Psoas muscle (tissue), 8 donors: ENCODE measurements at regions of chr10 and their contacts with region 1.

Region 1: GRCh38 chr10:59079386-59080226 is 96.8 kb upstream of the PHYHIPL start:
- DNase-seq: no peak
- ATAC-seq: peak in 2 of 4 donors; percentile 19 to 23
- H3K4me3 ChIP-seq: no peak overlapping the region
- H3K27ac ChIP-seq: no peak overlapping the region
- H3K4me1 ChIP-seq: no peaks in the 10 kb centered on the region
- H3K27me3 ChIP-seq: no peaks in the 10 kb centered on the region
- CTCF ChIP-seq: no peak

Region 2: DNA sequence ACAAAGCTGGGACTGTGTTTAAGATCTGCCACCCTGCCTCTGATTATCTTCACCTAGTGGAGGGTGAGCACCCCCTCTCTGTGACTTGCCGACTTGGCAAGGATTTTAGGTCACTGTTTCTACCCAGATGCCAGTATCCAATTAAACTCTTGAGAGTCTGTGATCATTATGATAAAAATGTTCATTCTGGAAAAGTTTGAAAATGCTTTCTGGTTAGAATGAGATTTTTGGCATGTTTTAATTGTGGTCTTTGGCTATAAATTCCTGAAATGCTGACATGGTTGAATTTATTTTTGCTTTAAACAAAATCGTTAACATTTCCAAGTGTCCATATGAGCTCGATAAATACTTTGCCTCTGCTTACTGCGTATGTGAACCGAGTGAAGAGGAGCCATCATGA is 345.5 kb before region 1 on chr10:
- intact Hi-C with region 1: no loop called
- DNase-seq: no peak
- ATAC-seq: peak; percentile 27 to 53 (median 47)
- H3K4me3 ChIP-seq: no peak overlapping the region
- H3K27ac ChIP-seq: peak overlapping the region; percentile 3
- H3K4me1 ChIP-seq: peaks cover 14% of the 10 kb centered on the region
- H3K27me3 ChIP-seq: no peaks in the 10 kb centered on the region
- CTCF ChIP-seq: no peak

Region 3: DNA sequence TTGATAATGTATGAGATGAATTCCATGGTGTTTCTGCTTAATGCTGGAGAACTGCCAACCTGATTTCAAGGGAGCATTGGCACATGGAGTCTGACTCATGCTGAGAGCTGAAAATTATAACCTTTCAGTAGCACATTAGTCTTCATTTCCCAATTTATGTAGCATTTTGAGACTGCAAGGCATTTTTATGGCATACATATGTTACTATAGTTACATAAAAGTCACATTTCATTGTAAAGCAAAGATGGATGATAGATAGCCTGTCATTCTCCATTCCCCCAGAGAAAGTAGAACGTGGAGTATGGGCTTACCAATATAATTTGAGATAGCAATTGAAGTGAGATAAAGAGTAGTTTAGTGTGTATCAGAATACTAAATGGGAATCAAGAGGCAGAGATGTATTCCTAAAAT is 527.0 kb after region 1 on chr10:
- intact Hi-C with region 1: no loop called
- DNase-seq: no peak
- ATAC-seq: no peak
- H3K4me3 ChIP-seq: no peak overlapping the region
- H3K27ac ChIP-seq: no peak overlapping the region
- H3K4me1 ChIP-seq: no peaks in the 10 kb centered on the region
- H3K27me3 ChIP-seq: no peaks in the 10 kb centered on the region
- CTCF ChIP-seq: no peak

Region 4: DNA sequence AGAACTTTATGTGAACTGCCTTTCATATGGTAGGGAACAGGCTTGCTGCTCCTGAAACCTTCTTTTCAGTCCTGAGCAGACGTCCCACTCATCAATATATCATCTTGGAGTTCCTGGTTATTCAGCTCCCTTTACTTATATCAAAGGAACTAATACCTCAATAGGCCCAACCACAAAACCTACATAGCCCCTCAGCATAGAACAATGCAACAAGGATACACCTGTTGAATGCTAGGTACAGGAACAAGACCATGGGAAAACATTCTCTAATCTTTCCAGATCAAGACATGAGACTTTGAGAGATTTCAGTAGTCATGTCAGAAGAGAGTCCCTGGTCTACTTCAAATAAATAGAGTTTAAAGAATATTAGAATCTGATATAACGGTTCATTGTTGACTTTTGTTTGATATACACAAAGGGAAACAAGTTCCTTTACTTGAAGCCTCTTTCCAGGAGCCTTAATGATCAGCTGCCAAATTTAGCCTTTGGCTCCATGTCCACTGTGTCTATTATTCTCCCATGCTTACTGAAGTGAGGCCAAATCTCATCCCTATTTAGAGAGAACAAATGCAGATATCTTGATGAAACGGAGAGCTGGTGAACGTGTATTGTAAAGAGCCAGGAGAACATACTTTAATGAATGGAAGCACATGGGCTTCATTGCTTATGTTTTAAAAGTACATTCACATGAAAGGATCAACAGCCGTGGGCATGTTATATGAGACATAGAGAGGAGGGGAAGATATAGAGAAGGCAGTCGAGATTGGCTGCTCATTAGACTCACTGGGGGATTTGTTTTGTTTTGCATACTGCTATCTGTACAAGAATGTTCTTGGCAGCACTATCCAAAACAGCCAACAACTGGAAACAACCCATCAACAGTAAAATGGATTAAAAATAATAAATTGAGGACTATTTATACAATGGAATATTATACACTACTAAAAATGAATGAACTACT is 1854.9 kb after region 1 on chr10:
- intact Hi-C with region 1: loop called in 1 of 2 experiments (anchors 5 kb)
- DNase-seq: no peak
- ATAC-seq: peak in 3 of 4 donors; percentile 42 to 64 (median 60)
- H3K4me3 ChIP-seq: no peak overlapping the region
- H3K27ac ChIP-seq: peak overlapping the region; percentile 37
- H3K4me1 ChIP-seq: peaks cover 79% of the 10 kb centered on the region
- H3K27me3 ChIP-seq: no peaks in the 10 kb centered on the region
- CTCF ChIP-seq: no peak